Heart left ventricle (tissue), 16 donors: ENCODE measurements at regions of chr1 and their contacts with region 1.

Region 1: DNA sequence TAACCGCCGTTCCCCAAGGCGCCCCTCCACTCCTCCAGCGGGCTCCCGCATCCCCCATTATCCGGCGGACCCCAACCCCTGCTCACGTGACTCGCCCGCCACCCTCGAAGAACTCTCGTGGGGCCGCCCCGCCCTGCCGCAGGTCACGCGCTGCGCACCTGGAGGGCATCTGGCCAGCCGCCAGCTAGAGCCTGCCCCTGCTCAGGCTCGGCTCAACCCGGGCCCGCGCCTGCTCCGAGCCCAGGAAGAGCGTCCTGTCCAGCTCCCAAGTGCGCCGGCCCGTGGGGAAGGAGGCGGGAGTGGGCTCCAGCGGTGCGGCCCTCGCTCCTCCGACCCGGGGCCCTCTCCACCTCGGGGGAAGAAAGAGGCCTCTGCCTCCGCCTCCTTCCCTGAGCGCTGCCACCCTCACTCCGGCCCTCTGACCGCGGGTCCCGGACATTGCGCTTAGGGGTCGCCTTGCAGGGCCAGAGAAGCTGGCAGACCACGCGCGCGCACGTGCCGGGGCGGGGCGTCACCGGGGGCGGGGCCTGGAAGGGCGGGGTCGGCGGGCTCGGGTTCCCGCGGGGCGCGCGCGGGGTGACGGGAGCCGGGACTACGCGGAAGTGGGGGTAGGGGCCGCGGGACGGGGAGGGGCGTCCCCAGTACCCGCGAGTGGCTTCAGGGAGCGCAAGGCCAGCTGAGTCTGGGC is 28.4 kb downstream of the HMGN2 start:
- DNase-seq: peak; percentile 90 to 96 (median 92)
- ATAC-seq: peak; percentile 64 to 94 (median 92)
- H3K4me3 ChIP-seq: peak overlapping the region; percentile 52 to 80 (median 71)
- H3K27ac ChIP-seq: peak overlapping the region; percentile 70 to 97 (median 94)
- H3K4me1 ChIP-seq: peaks cover 0 to 19% (median 13%) of the 10 kb centered on the region in 12 donors
- H3K27me3 ChIP-seq: no peaks in the 10 kb centered on the region
- CTCF ChIP-seq: peak in 4 of 12 donors; percentile 0 to 36 (median 8)
- POLR2A ChIP-seq: peak in 1 of 2 donors; percentile 62

Region 2: DNA sequence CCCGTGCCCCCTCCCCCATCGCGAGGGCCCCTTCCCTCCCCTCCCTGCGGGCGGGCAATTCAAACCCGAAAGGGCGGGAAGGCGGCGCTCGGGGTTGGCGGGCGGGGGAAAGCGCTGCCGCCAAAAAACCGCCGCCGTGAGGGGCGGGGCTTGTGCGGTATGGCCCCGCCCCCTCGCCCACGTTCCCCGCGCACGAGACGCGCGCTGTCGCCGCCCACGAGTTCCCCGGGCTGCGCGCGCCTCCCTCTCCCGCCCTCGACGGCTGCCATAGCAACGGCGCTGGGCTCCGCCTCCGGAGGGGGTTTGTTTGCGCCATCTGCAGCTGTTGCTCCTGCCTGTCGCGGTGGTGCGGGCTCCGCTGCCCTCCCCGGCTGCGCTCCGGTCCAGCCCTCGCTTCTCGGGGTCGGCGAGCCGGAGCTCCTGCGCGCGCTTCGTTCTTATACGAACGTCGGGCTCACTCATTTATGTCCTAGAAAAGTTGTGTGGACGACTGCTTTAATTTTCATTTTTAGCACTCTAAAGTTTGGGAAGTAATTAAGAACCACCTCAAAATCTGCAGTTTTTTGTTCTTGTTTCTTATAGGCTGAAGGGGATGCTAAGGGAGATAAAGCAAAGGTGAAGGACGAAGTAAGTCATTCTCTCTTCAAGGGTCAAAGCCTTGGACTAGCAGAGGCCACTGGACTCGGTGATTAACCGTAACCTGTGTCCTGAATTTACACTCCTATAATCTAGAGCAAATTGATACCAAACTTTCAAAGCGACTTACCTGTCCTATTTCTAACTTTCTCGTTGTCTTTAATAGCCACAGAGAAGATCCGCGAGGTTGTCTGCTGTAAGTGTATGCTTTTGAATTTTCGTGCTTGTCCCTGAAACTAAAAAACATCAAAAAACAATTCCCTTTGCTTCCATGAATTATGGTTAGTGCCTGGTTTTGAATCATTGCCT is 27.5 kb before region 1 on chr1:
- intact Hi-C with region 1: loop called in 1 of 10 experiments (anchors 2 kb)
- DNase-seq: peak; percentile 96 to 99 (median 97)
- ATAC-seq: peak; percentile 84 to 89 (median 85)
- H3K4me3 ChIP-seq: peak overlapping the region; percentile 61 to 100 (median 92)
- H3K27ac ChIP-seq: peak overlapping the region; percentile 92 to 100 (median 100)
- H3K4me1 ChIP-seq: peaks cover 0 to 41% (median 33%) of the 10 kb centered on the region in 12 donors
- H3K27me3 ChIP-seq: no peaks in the 10 kb centered on the region
- CTCF ChIP-seq: no peak
- POLR2A ChIP-seq: peak in 1 of 2 donors; percentile 43

Region 3: GRCh38 chr1:26529655-26530409 is 29.2 kb after region 1 on chr1 and contains the start of gene RPS6KA1:
- intact Hi-C with region 1: loop called in 1 of 10 experiments (anchors 2 kb)
- DNase-seq: peak; percentile 51 to 81 (median 64)
- ATAC-seq: peak in 3 of 4 donors; percentile 78 to 87 (median 78)
- H3K4me3 ChIP-seq: peak within 1 kb of the TSS; percentile 48 to 93 (median 68)
- H3K27ac ChIP-seq: peak within 1 kb of the TSS in 3 of 12 donors; percentile 27 to 61 (median 39)
- H3K4me1 ChIP-seq: peaks cover 0 to 23% (median 5%) of the 10 kb centered on the region in 12 donors
- H3K27me3 ChIP-seq: peaks cover 0 to 4% (median 0%) of the 10 kb centered on the region in 9 donors
- CTCF ChIP-seq: no peak
- POLR2A ChIP-seq: peak in 1 of 2 donors; percentile 27
- total RNA-seq, gene RPS6KA1: 1.1 to 24.4 (median 3.8) TPM

Region 4: DNA sequence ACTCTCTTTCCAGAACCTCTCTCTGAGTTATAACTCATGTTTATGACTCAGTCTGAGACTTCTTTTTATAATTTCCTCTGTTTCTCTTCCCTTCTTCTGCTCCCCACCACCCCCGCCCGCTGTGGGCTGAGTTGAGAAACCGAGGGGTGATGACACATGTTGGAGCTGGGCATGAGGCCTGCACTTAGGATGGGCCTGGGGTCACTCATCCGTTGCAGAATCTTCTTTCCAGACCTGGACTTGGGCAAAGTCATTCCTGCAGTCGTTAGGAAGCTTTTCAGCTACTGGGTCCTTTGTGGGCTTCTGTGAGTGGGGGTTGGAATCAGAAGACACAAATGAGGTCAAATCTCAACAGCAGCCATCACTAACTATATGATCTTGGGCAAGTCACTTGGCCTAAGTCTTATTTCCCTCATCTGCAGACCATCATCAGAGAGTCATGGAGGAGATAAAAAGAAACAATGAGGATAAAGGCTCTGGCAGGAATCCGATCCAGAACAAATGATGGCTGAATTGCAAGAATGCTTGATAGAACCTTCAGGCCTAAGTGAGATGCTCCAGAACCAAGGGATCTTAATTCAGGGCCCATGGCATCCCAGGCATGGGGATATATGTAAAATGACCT is 82.3 kb after region 1 on chr1:
- intact Hi-C with region 1: loop called in 1 of 10 experiments (anchors 10 kb)
- DNase-seq: peak in 1 of 5 donors; percentile 37
- ATAC-seq: peak in 2 of 4 donors; percentile 31 to 62
- H3K4me3 ChIP-seq: no peak overlapping the region
- H3K27ac ChIP-seq: peak overlapping the region in 1 of 12 donors; percentile 37
- H3K4me1 ChIP-seq: peaks cover 0 to 25% (median 0%) of the 10 kb centered on the region in 12 donors
- H3K27me3 ChIP-seq: peaks cover 0 to 6% (median 0%) of the 10 kb centered on the region in 9 donors
- CTCF ChIP-seq: no peak
- POLR2A ChIP-seq: no peak

Region 5: GRCh38 chr1:26602378-26602959 is 101.8 kb after region 1 on chr1:
- intact Hi-C with region 1: loop called in 1 of 10 experiments (anchors 5 kb)
- DNase-seq: peak in 2 of 5 donors; percentile 35 to 36
- ATAC-seq: peak in 2 of 4 donors; percentile 28 to 42
- H3K4me3 ChIP-seq: no peak overlapping the region
- H3K27ac ChIP-seq: no peak overlapping the region
- H3K4me1 ChIP-seq: peaks cover 0 to 23% (median 0%) of the 10 kb centered on the region in 12 donors
- H3K27me3 ChIP-seq: no peaks in the 10 kb centered on the region
- CTCF ChIP-seq: peak; percentile 79 to 95 (median 90)
- POLR2A ChIP-seq: no peak

Region 6: GRCh38 chr1:26799479-26800142 is 299.0 kb after region 1 on chr1:
- intact Hi-C with region 1: loop called in 2 of 10 experiments (anchors 5 to 10 kb)
- DNase-seq: peak; percentile 69 to 89 (median 79)
- ATAC-seq: peak; percentile 89 to 95 (median 92)
- H3K4me3 ChIP-seq: peak overlapping the region in 5 of 12 donors; percentile 0 to 17 (median 9)
- H3K27ac ChIP-seq: peak overlapping the region; percentile 76 to 93 (median 84)
- H3K4me1 ChIP-seq: peaks cover 0 to 58% (median 48%) of the 10 kb centered on the region in 12 donors
- H3K27me3 ChIP-seq: no peaks in the 10 kb centered on the region
- CTCF ChIP-seq: no peak
- POLR2A ChIP-seq: no peak

Region 7: GRCh38 chr1:26874896-26875295 is 374.3 kb after region 1 on chr1:
- intact Hi-C with region 1: loop called in 2 of 10 experiments (anchors 5 to 10 kb)
- DNase-seq: no peak
- ATAC-seq: no peak
- H3K4me3 ChIP-seq: no peak overlapping the region
- H3K27ac ChIP-seq: no peak overlapping the region
- H3K4me1 ChIP-seq: peaks cover 0 to 7% (median 0%) of the 10 kb centered on the region in 12 donors
- H3K27me3 ChIP-seq: no peaks in the 10 kb centered on the region
- CTCF ChIP-seq: no peak
- POLR2A ChIP-seq: no peak